Left ventricle myocardium superior (tissue), 1 donor: ENCODE measurements at regions of chr9 and their contacts with region 1.

Region 1: GRCh38 chr9:100626949-100627348 is 49.1 kb downstream of the CAVIN4 start:
- DNase-seq: no peak
- ATAC-seq: no peak

Region 2: GRCh38 chr9:100525563-100525962 is 101.4 kb before region 1 on chr9:
- intact Hi-C with region 1: no loop called
- DNase-seq: no peak
- ATAC-seq: no peak

Region 3: GRCh38 chr9:100933656-100934055 is 306.7 kb after region 1 on chr9:
- intact Hi-C with region 1: no loop called
- DNase-seq: no peak
- ATAC-seq: no peak

Region 4: DNA sequence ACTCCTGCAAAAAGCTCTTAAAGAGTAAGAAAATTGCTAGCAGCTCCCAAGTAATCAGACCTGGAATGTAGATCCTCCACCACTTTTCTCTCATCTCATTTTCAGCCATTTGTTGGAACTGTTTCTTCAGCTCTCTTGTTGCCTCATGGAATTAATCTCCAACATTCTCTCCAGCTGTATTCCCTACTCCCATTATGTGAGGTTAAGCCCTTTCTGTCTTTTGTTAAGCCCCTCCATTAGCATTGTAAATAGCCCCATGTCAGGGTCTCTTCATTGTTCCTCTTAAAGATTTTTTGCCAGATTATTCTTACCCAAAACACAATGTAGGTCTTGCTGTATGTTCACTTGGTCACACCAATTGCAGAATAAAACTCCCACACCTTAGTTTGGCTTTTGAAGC is 521.4 kb after region 1 on chr9:
- intact Hi-C with region 1: loop called (anchors 5 kb)
- DNase-seq: no peak
- ATAC-seq: no peak